Gastrocnemius medialis (tissue), 4 donors: ENCODE measurements at regions of chr11 and their contacts with region 1.

Region 1: GRCh38 chr11:105078283-105078682 is 33.1 kb upstream of the CARD16 start:
- DNase-seq: no peak
- ATAC-seq: peak in 1 of 2 donors; percentile 23
- H3K4me3 ChIP-seq: no peak overlapping the region
- H3K27ac ChIP-seq: no peak overlapping the region
- H3K4me1 ChIP-seq: peaks cover 8 to 10% of the 10 kb centered on the region in 2 donors
- H3K27me3 ChIP-seq: no peaks in the 10 kb centered on the region
- CTCF ChIP-seq: no peak
- POLR2A ChIP-seq: no peak

Region 2: DNA sequence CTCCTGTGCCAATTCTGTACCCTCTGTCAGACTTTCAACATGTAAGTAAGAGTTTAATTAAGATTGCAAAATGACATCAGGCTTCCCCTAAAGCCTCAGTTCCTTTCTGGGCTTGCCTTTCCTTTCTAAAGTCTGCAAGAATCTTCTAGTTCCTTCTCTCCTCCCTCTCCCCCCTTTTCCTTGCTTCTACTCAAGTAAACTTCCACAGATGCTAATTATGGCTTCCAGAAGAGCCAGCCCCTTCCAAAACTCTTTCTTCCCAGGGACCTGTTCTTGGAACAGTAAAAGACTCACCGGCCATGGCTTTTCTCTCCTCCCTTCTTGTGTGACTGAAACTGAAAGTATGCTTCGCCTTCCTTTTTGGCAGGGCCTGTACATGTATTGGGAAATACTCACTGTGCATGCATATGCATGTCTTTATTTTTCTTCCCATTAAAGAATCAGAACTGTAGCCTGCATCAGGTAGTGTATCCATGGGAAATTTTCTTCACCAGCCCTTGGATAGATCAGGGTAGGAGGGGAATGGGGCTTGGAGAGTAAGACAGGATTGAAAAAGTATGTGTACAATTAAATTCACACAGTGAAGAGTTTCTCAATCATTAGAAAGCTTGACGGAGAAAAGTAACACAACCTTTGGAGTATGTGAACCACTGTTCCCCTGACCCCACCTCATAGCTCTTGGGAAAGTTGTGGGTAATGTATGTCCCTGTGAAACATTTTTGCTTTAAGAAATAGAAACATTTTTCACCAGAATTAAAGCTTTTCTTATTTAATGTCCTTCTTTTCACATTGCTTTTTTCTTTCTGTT is 43.3 kb before region 1 on chr11 and contains the start of gene CASP1:
- in situ Hi-C with region 1: no loop called
- intact Hi-C with region 1: no loop called
- DNase-seq: no peak
- ATAC-seq: peak; percentile 85 to 87
- H3K4me3 ChIP-seq: peak within 1 kb of the TSS; percentile 30 to 49 (median 46)
- H3K27ac ChIP-seq: peak within 1 kb of the TSS; percentile 56 to 66 (median 60)
- H3K4me1 ChIP-seq: peaks cover 0 to 7% of the 10 kb centered on the region in 2 donors
- H3K27me3 ChIP-seq: no peaks in the 10 kb centered on the region
- CTCF ChIP-seq: no peak
- POLR2A ChIP-seq: peak in 1 of 2 donors; percentile 26
- total RNA-seq, gene CASP1: 1.1 to 7.8 (median 3.5) TPM

Region 3: DNA sequence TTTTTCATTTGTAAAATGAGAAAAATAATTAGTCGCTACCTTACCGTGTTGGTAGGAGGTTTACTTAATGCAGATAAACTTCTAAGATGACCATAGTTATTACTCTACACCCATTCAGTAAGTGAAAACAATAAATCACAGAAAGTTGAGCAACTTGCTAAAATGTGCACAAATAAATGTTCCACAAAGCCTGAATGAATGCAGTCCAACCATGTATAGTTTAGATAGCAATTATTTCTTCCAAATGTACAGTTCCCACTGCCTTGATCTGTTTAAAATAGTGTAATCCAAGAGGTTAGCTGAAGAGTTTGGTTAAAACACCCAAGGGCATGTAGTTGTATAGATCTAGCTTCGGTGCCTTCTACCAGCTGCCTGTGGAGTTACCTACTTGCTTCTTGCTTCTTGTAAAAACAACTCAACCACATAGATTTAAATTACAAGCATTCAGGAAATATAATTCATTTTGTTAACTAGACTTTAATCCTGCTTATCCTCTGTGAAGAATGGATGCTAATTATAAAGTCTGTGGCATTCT is 167.6 kb after region 1 on chr11:
- in situ Hi-C with region 1: no loop called
- intact Hi-C with region 1: loop called (anchors 5 kb)
- DNase-seq: no peak
- ATAC-seq: no peak
- H3K4me3 ChIP-seq: no peak overlapping the region
- H3K27ac ChIP-seq: no peak overlapping the region
- H3K4me1 ChIP-seq: peaks cover 14 to 15% of the 10 kb centered on the region in 2 donors
- H3K27me3 ChIP-seq: no peaks in the 10 kb centered on the region
- CTCF ChIP-seq: no peak
- POLR2A ChIP-seq: no peak